ENCODE measurements at regions of chrX and their contacts with region 1.

Region 1: DNA sequence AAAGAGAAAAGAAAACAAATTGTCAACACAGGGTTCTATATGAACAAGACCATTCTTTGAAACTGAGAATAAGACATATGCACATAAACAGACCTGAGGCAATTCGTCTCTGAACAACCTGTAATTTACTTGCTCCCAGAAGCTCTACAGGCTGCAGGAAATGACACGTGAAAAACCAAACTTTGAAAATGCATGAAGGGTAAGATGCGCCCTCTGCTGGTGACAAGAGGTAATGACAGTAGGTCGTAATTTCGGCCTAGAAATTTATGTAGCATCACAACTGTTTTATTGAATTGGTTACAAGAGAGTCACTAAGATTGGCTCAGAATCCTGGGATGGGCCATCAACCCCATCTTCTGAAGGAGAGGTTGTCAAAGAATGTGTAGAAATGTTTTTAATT is 276.5 kb downstream of the PPP4R3C start:
- DNase-seq: peak; percentile 45
- H3K4me3 ChIP-seq: no peak overlapping the region
- H3K27ac ChIP-seq: no peak overlapping the region
- H3K4me1 ChIP-seq: no peaks in the 10 kb centered on the region
- H3K27me3 ChIP-seq: no peaks in the 10 kb centered on the region

Region 2: DNA sequence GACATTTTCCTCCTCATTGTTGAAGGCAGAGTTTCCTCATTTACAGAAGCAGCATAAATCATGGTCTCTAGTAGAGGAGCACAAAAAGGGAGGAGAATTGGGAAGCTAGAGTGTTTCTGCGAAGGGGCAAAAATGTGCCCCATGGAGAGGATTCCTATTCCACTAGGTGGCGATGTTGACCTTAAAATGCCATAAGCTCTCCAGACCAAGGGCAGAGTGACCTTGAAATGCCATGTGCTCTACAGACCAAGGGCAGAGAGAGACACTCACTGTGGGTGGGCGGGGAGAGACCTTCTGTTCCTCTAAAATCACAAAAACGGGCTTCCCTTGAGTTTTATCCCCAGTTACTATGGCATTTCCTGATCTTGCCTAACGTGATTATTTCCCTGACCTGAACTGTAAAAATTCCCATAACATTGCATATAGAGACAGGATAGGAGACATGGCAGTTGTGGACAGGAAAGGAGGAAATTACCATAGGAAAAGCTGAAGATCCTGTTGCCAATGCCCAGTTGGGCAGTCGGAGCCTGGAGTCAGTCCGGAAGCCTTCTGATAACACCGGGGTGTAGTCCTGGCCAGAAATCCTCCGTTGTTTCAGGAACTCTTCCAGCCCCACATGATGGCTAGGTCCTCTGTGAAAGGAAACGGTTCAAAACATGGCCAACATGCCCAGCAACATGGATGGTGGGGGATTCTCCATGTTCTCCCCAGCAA is 403.0 kb before region 1 on chrX:
- in situ Hi-C with region 1: loop called (anchors 25 kb)
- DNase-seq: peak; percentile 48
- H3K4me3 ChIP-seq: no peak overlapping the region
- H3K27ac ChIP-seq: no peak overlapping the region
- H3K4me1 ChIP-seq: no peaks in the 10 kb centered on the region
- H3K27me3 ChIP-seq: no peaks in the 10 kb centered on the region

Measured in GM23248 (cell line).